T-cell (primary cell): ENCODE measurements at regions of chr15 and their contacts with region 1.

Region 1: GRCh38 chr15:50697109-50697797 is 10.7 kb upstream of the TRPM7 start:
- DNase-seq: no peak
- ATAC-seq: no peak
- H3K4me3 ChIP-seq: no peak overlapping the region
- H3K4me3 Mint-ChIP-seq: no peak overlapping the region
- H3K27ac ChIP-seq: no peak overlapping the region
- H3K27ac Mint-ChIP-seq: no peak overlapping the region
- H3K4me1 ChIP-seq: no peaks in the 10 kb centered on the region
- H3K4me1 Mint-ChIP-seq: peaks cover 0 to 1% (median 0%) of the 10 kb centered on the region in 3 donors
- H3K27me3 ChIP-seq: no peaks in the 10 kb centered on the region
- H3K27me3 Mint-ChIP-seq: no peaks in the 10 kb centered on the region

Region 2: DNA sequence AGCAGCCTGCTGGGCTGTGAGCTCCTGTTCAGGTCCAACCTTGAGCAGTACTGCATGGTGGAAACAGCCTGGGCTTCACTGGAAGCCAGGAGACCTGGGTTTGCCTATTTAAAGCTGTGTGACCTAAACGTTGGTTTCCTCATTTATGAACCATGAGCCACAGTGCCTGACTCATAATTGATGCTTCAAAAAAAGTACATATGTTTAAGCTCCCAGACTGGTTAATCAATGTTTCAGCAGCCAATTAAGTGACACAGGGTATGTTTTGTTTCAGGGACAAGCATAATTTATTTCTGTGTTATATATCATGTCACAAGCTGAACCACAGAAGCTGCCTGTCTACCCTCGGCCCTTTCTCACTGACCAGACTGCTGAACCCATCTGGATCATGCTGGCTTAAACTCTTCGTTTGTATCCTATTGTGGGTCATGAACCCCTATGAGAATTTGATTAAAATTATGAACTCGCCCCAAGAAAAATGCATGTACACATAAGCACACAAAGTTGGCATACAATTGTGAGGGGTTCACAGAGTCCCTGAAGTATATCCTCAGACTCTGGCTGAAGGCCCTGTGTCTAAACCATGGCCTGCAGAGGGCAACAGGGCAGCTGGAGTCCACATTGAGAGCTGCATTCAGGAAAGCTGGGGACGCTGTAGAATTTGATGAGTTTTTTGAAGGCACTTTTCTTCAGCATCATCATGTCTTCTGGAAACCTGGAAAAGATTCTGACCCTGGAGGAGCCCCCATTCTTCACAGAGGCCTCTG is 455.4 kb before region 1 on chr15:
- CTCF ChIA-PET with region 1: no interaction called
- POLR2A ChIA-PET with region 1: no interaction called
- DNase-seq: no peak
- ATAC-seq: no peak
- H3K4me3 ChIP-seq: no peak overlapping the region
- H3K4me3 Mint-ChIP-seq: no peak overlapping the region
- H3K27ac ChIP-seq: no peak overlapping the region
- H3K27ac Mint-ChIP-seq: no peak overlapping the region
- H3K4me1 ChIP-seq: no peaks in the 10 kb centered on the region
- H3K4me1 Mint-ChIP-seq: peaks cover 0 to 1% (median 0%) of the 10 kb centered on the region in 3 donors
- H3K27me3 ChIP-seq: no peaks in the 10 kb centered on the region
- H3K27me3 Mint-ChIP-seq: no peaks in the 10 kb centered on the region

Region 3: GRCh38 chr15:50670115-50670514 is 27.1 kb before region 1 on chr15:
- CTCF ChIA-PET with region 1: interaction called in 1 of 2 experiments, 10 read pairs
- POLR2A ChIA-PET with region 1: no interaction called
- DNase-seq: no peak
- ATAC-seq: no peak
- H3K4me3 ChIP-seq: no peak overlapping the region
- H3K4me3 Mint-ChIP-seq: no peak overlapping the region
- H3K27ac ChIP-seq: no peak overlapping the region
- H3K27ac Mint-ChIP-seq: no peak overlapping the region
- H3K4me1 ChIP-seq: no peaks in the 10 kb centered on the region
- H3K4me1 Mint-ChIP-seq: peaks cover 30 to 37% (median 30%) of the 10 kb centered on the region in 3 donors
- H3K27me3 ChIP-seq: no peaks in the 10 kb centered on the region
- H3K27me3 Mint-ChIP-seq: no peaks in the 10 kb centered on the region